ENCODE measurements at regions of chr7 and their contacts with region 1.

Region 1: DNA sequence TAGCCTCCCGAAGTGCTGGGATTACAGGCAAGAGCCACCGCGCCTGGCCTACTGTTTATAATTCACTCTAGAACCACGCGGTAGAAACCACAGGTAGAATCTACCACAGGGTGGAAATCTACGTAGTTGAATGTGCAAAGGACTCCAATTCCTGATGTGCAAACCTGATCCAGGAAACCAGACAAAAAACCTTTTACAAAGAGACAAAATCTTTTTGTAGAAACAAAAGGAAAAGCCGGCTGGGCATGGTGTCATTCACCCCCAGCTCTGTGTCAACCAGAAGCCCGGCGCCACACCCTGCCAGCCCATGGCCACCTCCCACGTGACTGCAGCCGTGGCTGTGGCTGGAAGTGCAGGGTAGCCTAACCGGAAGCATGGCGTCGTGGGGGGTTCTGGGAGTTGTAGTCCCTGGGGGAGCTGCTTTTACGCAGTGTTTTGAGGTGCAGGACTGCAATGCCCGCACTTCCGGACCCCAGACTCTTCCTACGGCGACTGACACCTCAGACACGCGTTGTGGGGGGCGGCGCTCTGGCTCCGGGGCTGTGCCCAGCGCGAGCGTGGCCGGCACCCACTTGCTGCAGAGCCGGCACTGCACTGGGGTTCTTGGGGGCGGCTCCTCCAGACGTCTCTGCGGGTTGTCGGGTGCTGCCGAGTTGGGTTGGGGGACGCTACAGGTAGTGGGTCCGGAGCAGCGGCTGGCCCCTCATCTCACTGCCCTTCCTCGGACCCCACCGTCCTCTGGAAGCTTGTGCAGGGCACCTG is 41.5 kb upstream of the RNF216 start:
- DNase-seq: peak; percentile 94 to 99 (median 98)
- ATAC-seq: peak; percentile 81
- H3K4me3 ChIP-seq: peak overlapping the region; percentile 77
- H3K4me3 Mint-ChIP-seq: peak overlapping the region; percentile 90
- H3K27ac ChIP-seq: peak overlapping the region; percentile 79 to 95
- H3K27ac Mint-ChIP-seq: peak overlapping the region; percentile 91
- H3K4me1 ChIP-seq: peaks cover 39% of the 10 kb centered on the region
- H3K4me1 Mint-ChIP-seq: peaks cover 34% of the 10 kb centered on the region
- H3K27me3 ChIP-seq: no peaks in the 10 kb centered on the region
- H3K27me3 Mint-ChIP-seq: no peaks in the 10 kb centered on the region
- CTCF ChIP-seq: no peak

Region 2: DNA sequence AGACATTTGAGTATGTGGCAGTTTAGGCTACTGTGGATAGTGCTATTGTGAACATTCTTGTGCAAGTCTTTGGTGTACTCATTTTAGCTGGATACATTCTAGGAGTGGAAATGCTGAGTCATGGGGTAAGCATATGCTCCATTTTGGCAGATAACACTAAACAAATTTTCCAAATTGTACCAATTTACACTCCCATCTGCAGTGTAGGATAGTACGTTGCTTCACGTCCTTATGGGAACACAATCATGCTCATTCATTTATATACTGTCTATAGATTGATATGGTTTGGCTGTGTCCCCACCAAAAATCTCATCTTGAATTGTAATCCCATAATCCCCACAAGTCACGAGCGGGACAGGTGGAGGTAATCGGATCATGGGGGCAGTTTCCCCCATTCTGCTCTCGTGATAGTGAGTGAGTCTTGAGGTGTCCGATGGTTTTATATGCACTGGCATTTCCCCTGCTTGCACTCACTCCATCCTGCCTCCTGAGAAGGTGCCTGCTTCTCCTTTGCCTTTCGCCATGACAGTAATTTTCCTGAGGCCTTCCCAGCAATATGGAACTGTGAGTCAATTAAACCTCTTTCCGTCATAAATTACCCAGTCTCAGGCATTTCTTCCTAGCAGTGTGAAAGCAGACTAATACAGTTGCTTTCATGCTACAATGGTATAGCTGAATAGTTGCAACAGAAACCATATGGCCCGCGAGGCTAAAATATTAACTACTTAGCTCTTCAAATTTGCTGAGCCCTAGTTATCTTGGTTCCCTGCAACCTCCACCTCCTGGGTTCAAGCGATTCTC is 67.0 kb before region 1 on chr7:
- CTCF ChIA-PET with region 1: no interaction called
- POLR2A ChIA-PET with region 1: no interaction called
- intact Hi-C with region 1: no loop called
- DNase-seq: no peak
- ATAC-seq: no peak
- H3K4me3 ChIP-seq: no peak overlapping the region
- H3K4me3 Mint-ChIP-seq: no peak overlapping the region
- H3K27ac ChIP-seq: no peak overlapping the region
- H3K27ac Mint-ChIP-seq: no peak overlapping the region
- H3K4me1 ChIP-seq: no peaks in the 10 kb centered on the region
- H3K4me1 Mint-ChIP-seq: peaks cover 12% of the 10 kb centered on the region
- H3K27me3 ChIP-seq: no peaks in the 10 kb centered on the region
- H3K27me3 Mint-ChIP-seq: no peaks in the 10 kb centered on the region
- CTCF ChIP-seq: no peak

Region 3: DNA sequence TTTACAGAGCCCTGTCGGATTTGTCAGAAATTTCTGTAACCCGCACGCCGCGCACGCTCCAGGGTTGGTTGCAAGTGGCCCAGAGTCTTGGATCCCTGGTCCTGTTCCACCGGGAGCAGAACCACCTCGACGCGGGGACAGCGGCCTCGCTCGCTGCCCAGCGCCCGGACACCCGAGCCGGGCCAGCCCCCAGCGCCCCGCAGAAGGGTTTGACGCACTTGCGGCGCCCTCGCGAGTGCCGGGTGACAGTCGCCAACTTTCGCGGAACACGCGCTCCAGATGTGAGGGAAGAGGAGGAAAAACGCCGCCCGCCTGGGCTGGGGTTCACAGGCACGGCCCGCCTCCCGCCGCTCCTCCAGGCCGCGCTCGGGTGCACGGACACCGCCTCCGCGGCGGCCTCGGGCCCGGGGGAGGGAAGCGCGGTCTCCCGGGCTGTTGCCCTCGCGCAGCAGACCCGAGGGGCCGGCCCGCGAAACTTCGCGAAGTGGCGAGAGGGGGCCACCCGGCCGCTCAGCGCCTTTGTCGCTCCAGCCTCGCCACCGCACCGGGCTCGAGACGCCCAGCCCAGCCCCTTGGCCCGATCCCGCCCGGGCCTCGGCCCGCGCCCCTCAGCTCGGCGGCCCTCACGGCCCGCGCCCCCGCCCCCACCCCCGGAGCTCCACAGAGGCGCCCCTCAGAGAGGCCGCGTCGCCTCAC is 42.0 kb before region 1 on chr7:
- CTCF ChIA-PET with region 1: interaction called, 17 read pairs
- POLR2A ChIA-PET with region 1: interaction called, 27 read pairs
- intact Hi-C with region 1: loop called (anchors 2 kb)
- DNase-seq: peak in 11 of 14 experiments; percentile 2 to 53 (median 24)
- ATAC-seq: peak; percentile 5
- H3K4me3 ChIP-seq: peak overlapping the region; percentile 52
- H3K4me3 Mint-ChIP-seq: peak overlapping the region; percentile 93
- H3K27ac ChIP-seq: peak overlapping the region in 1 of 2 donors; percentile 73
- H3K27ac Mint-ChIP-seq: peak overlapping the region; percentile 88
- H3K4me1 ChIP-seq: peaks cover 40% of the 10 kb centered on the region
- H3K4me1 Mint-ChIP-seq: peaks cover 41% of the 10 kb centered on the region
- H3K27me3 ChIP-seq: no peaks in the 10 kb centered on the region
- H3K27me3 Mint-ChIP-seq: no peaks in the 10 kb centered on the region
- CTCF ChIP-seq: no peak

Region 4: GRCh38 chr7:5838761-5839500 is 16.0 kb after region 1 on chr7:
- CTCF ChIA-PET with region 1: interaction called, 4 read pairs
- POLR2A ChIA-PET with region 1: interaction called, 48 read pairs
- intact Hi-C with region 1: loop called in 1 of 2 experiments (anchors 1 kb)
- DNase-seq: no peak
- ATAC-seq: no peak
- H3K4me3 ChIP-seq: no peak overlapping the region
- H3K4me3 Mint-ChIP-seq: peak overlapping the region; percentile 83
- H3K27ac ChIP-seq: no peak overlapping the region
- H3K27ac Mint-ChIP-seq: peak overlapping the region; percentile 85
- H3K4me1 ChIP-seq: peaks cover 52% of the 10 kb centered on the region
- H3K4me1 Mint-ChIP-seq: peaks cover 42% of the 10 kb centered on the region
- H3K27me3 ChIP-seq: no peaks in the 10 kb centered on the region
- H3K27me3 Mint-ChIP-seq: no peaks in the 10 kb centered on the region
- CTCF ChIP-seq: no peak

Region 5: DNA sequence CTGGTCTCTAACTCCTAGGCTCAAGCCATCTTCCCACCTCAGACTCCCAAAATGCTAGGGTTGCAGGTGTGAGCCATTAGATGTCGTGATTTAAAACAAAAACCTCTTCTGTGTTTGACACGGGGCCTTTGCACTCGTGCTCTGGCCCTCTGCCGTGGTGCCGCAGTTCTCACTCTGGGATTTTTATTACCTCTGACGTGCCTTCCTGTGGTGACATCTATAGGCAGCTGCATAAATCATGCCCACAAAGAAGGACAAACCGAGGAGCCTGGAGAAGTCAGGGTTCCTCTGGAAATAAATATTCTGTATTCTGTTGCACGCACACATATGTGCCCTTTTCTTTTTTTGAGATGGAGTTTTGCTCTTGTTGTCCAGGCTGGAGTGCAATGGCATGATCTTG is 31.8 kb after region 1 on chr7:
- CTCF ChIA-PET with region 1: interaction called, 3 read pairs
- POLR2A ChIA-PET with region 1: interaction called, 7 read pairs
- intact Hi-C with region 1: loop called in 1 of 2 experiments (anchors 5 kb)
- DNase-seq: no peak
- ATAC-seq: no peak
- H3K4me3 ChIP-seq: no peak overlapping the region
- H3K4me3 Mint-ChIP-seq: no peak overlapping the region
- H3K27ac ChIP-seq: no peak overlapping the region
- H3K27ac Mint-ChIP-seq: no peak overlapping the region
- H3K4me1 ChIP-seq: peaks cover 28% of the 10 kb centered on the region
- H3K4me1 Mint-ChIP-seq: peaks cover 25% of the 10 kb centered on the region
- H3K27me3 ChIP-seq: no peaks in the 10 kb centered on the region
- H3K27me3 Mint-ChIP-seq: no peaks in the 10 kb centered on the region
- CTCF ChIP-seq: no peak

Region 6: DNA sequence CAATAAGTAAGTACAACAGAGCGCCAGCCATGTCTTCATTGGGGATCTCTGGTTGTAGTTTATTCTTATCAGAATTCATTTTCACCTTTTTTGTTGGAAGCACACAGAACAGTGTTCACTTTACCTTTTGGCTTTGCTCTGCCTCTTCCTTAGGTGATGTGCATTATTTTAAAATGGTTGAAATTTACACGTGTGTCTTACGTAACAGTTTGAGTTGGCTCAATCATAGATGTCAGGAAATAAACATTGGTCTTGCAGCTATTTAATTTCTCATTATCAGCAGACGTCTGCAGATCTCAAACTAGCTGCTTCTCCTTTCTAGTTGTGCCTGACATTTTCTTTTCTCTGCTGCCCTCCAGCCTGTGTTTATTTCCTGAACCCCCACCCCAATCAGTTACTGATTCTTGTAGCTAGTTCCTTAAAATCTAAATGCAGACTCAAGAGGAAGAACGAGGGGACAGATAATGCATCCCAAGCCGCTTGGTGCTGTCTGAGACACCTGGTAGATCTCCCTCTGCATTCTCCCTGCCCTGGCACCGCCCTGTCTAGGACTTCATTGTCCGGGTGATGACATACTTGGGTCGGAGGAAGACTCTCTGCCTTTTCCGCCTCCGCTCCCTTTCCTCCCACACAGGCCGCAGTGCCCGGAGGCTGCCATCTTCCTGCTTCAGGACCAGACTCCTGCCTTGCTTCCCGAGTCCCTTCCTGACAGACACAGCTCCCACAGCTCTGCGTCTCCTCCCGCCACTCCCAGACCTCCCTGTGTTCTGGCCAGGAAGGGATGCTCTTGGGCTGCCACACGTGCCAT is 316.5 kb after region 1 on chr7:
- CTCF ChIA-PET with region 1: no interaction called
- POLR2A ChIA-PET with region 1: no interaction called
- intact Hi-C with region 1: no loop called
- DNase-seq: no peak
- ATAC-seq: no peak
- H3K4me3 ChIP-seq: no peak overlapping the region
- H3K4me3 Mint-ChIP-seq: no peak overlapping the region
- H3K27ac ChIP-seq: no peak overlapping the region
- H3K27ac Mint-ChIP-seq: no peak overlapping the region
- H3K4me1 ChIP-seq: no peaks in the 10 kb centered on the region
- H3K4me1 Mint-ChIP-seq: no peaks in the 10 kb centered on the region
- H3K27me3 ChIP-seq: no peaks in the 10 kb centered on the region
- H3K27me3 Mint-ChIP-seq: no peaks in the 10 kb centered on the region
- CTCF ChIP-seq: no peak

Measured in CD4-positive, alpha-beta T cell (primary cell).